Activated CD4-positive, alpha-beta T cell treated with anti-CD3 and anti-CD28 coated beads, Interleukin-2, amount 10 ng/mL, durations not matched to agents 24 days and 14 days (primary cell): ENCODE measurements at regions of chr1 and their contacts with region 1.

Region 1: GRCh38 chr1:64923294-64923721 is 43.0 kb downstream of the JAK1 start:
- DNase-seq: no peak
- H3K4me3 Mint-ChIP-seq: peak overlapping the region; percentile 43
- H3K27ac Mint-ChIP-seq: peak overlapping the region; percentile 83
- H3K4me1 Mint-ChIP-seq: peaks cover 62% of the 10 kb centered on the region
- H3K27me3 Mint-ChIP-seq: no peaks in the 10 kb centered on the region

Region 2: GRCh38 chr1:64775113-64775512 is 148.2 kb before region 1 on chr1:
- intact Hi-C with region 1: no loop called
- DNase-seq: no peak
- H3K4me3 Mint-ChIP-seq: no peak overlapping the region
- H3K27ac Mint-ChIP-seq: no peak overlapping the region
- H3K4me1 Mint-ChIP-seq: no peaks in the 10 kb centered on the region
- H3K27me3 Mint-ChIP-seq: no peaks in the 10 kb centered on the region

Region 3: GRCh38 chr1:64877151-64877550 is 46.2 kb before region 1 on chr1:
- intact Hi-C with region 1: loop called (anchors 1 kb)
- DNase-seq: peak; percentile 85
- H3K4me3 Mint-ChIP-seq: peak overlapping the region; percentile 62
- H3K27ac Mint-ChIP-seq: peak overlapping the region; percentile 45
- H3K4me1 Mint-ChIP-seq: peaks cover 56% of the 10 kb centered on the region
- H3K27me3 Mint-ChIP-seq: no peaks in the 10 kb centered on the region

Region 4: DNA sequence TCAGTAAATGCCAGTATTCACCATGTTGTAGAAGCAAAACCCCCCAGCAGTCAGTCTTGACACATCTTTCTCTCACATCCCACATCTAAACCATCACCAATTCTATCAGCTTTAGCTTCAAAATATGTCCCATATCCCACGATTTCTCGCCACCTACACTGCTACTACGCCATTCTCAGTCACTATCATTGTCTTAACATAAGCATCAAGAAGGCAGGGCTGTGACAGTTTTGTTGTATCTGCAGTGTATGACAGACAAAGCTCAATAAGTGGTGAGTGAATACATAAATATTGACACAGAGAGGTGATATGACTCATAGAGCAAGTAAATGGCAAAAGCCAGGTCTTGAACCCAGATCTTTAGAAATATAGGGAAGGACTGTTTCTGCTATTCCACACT is 16.9 kb before region 1 on chr1:
- intact Hi-C with region 1: loop called (anchors 1 kb)
- DNase-seq: no peak
- H3K4me3 Mint-ChIP-seq: peak overlapping the region; percentile 15
- H3K27ac Mint-ChIP-seq: peak overlapping the region; percentile 73
- H3K4me1 Mint-ChIP-seq: peaks cover 26% of the 10 kb centered on the region
- H3K27me3 Mint-ChIP-seq: no peaks in the 10 kb centered on the region

Region 5: DNA sequence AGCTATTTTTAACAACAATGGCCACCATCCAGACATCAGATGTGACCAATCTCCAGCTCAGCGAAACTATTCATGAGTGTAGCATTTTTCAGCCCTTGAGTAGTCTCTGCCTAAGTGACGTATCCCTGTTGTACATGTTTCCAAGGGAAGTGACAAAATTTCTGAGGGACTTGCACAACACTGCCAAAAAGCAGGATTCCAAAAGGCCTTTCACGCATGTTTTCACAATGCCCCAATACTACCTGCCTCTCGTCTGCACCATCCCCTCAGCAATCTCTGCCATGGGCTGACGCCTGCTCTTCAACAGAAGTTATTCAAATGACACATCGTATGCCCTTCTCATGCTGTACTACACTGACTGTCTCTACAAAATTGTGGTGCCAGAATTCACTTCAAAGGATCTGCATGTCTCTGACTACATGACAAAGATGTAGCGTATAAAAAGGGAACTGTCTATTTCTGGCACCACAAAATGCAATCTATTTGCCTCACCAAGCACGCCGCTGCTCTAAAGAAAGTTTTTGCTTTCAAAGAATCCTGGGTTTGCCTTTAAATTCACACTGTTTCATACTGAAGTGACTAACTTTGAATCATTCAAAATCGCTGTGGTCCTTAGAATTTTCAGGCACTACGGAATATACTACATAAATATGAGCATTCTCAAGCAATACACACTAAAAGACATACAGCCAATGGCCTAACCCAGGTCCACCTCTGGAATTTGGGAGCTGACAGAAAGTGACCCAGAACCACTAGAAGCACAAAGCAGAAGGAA is 10.2 kb after region 1 on chr1:
- intact Hi-C with region 1: loop called (anchors 1 kb)
- DNase-seq: no peak
- H3K4me3 Mint-ChIP-seq: no peak overlapping the region
- H3K27ac Mint-ChIP-seq: peak overlapping the region; percentile 31
- H3K4me1 Mint-ChIP-seq: peaks cover 42% of the 10 kb centered on the region
- H3K27me3 Mint-ChIP-seq: no peaks in the 10 kb centered on the region

Region 6: GRCh38 chr1:64966158-64966971 is 43.1 kb after region 1 on chr1 and contains the start of gene JAK1:
- intact Hi-C with region 1: loop called (anchors 1 kb)
- DNase-seq: peak; percentile 96
- H3K4me3 Mint-ChIP-seq: peak within 1 kb of the TSS; percentile 85
- H3K27ac Mint-ChIP-seq: peak within 1 kb of the TSS; percentile 89
- H3K4me1 Mint-ChIP-seq: peaks cover 51% of the 10 kb centered on the region
- H3K27me3 Mint-ChIP-seq: peaks cover 2% of the 10 kb centered on the region
- total RNA-seq, gene JAK1: 86.5 and 86.6 TPM in 2 replicates

Region 7: GRCh38 chr1:65067491-65068201 is 144.3 kb after region 1 on chr1:
- intact Hi-C with region 1: loop called (anchors 5 kb)
- DNase-seq: peak; percentile 84
- H3K4me3 Mint-ChIP-seq: peak overlapping the region; percentile 85
- H3K27ac Mint-ChIP-seq: peak overlapping the region; percentile 97
- H3K4me1 Mint-ChIP-seq: peaks cover 33% of the 10 kb centered on the region
- H3K27me3 Mint-ChIP-seq: no peaks in the 10 kb centered on the region